Activated CD4-positive, alpha-beta memory T cell treated with anti-CD3 and anti-CD28 coated beads, Interleukin-2, amount 10 ng/mL, durations not matched to agents 7 days and 5 days (primary cell): ENCODE measurements at regions of chr7 and their contacts with region 1.

Region 1: DNA sequence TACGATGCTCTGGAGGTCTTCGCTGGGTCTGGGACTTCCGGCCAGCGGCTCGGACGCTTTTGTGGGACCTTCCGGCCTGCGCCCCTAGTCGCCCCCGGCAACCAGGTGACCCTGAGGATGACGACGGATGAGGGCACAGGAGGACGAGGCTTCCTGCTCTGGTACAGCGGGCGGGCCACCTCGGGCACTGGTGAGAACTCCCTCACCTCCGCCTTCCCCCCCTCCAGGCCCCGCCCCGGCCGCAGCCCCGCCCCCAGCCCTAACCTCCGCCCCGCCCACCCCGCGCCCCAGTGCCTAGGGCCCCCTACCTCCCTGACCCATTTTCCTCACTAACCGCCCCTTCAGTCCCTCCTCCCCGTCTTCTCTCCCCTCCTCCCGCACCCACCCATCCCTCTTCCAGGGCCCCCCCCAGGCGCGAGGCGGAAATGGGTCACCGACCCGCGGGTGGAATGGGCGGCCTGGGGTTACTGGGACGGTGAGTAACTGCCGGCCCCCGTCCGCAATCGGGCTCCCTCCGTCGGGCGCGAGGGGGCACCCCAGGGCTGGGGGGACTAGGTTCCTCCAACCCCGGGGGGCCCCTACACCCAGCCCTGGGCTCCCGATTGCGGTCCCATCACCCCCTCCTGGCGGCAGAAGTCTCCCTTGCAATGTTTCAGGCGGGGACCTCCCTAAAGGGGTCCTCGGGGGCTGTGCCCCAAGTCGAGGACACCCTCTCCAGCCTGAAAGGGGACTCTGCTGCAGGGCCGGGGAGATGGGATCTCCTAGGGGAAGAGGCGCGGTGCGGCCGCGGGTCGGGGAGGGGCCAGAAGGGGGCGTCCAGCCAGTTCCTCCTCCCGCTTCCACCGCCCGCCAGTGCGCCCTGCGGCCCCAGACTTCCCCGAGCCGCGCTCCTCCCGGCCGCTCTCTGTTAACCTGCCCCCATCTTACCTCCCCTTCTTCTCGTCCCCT is 2.1 kb downstream of the PCOLCE start:
- DNase-seq: peak; percentile 85
- H3K4me3 Mint-ChIP-seq: peak overlapping the region; percentile 82
- H3K27ac Mint-ChIP-seq: peak overlapping the region; percentile 86
- H3K4me1 Mint-ChIP-seq: peaks cover 37% of the 10 kb centered on the region
- H3K27me3 Mint-ChIP-seq: peaks cover 3% of the 10 kb centered on the region

Region 2: DNA sequence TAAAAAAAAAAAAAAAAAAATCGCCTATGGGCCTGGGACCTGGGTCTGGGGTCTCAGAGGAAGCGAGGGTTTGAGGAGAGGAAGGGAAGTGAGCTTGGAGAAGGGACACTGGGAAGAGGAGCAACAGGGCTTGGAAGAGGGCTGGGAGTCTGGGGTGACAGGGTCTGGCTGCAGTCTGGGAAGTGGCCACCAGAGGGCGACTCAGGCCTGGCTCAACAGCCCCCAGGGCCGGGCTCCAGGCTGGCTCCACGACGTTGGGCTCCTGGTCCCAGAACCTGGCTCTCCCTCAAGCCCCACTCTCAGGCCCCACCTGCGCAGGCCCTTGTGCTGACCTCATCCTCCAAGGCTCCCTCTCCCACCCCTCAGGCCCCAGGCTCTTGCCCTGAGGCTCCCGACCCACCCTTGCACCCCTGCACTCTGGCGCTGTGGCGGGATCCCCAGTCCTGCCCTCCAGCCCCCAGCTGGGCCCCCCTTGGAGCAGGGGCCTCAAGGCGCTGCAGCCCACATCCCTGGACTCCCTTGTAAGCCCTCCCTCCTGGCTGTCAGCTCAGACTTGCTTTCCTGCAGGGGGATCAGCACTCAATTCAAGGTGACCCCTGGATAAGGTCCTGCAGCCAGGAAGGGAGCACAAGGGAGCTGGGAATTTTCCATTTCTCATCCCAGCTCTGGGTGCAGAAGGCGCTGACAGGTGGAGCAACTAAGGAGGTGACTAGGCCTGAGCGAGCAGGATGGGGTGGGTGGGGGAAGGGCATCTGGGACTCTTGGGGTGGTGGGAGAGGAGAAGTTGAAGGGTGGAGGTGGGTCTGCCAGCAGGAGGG is 134.9 kb before region 1 on chr7:
- CTCF ChIA-PET with region 1: no interaction called
- POLR2A ChIA-PET with region 1: no interaction called
- DNase-seq: peak; percentile 83
- H3K4me3 Mint-ChIP-seq: no peak overlapping the region
- H3K27ac Mint-ChIP-seq: peak overlapping the region; percentile 26
- H3K4me1 Mint-ChIP-seq: peaks cover 24% of the 10 kb centered on the region
- H3K27me3 Mint-ChIP-seq: no peaks in the 10 kb centered on the region

Region 3: DNA sequence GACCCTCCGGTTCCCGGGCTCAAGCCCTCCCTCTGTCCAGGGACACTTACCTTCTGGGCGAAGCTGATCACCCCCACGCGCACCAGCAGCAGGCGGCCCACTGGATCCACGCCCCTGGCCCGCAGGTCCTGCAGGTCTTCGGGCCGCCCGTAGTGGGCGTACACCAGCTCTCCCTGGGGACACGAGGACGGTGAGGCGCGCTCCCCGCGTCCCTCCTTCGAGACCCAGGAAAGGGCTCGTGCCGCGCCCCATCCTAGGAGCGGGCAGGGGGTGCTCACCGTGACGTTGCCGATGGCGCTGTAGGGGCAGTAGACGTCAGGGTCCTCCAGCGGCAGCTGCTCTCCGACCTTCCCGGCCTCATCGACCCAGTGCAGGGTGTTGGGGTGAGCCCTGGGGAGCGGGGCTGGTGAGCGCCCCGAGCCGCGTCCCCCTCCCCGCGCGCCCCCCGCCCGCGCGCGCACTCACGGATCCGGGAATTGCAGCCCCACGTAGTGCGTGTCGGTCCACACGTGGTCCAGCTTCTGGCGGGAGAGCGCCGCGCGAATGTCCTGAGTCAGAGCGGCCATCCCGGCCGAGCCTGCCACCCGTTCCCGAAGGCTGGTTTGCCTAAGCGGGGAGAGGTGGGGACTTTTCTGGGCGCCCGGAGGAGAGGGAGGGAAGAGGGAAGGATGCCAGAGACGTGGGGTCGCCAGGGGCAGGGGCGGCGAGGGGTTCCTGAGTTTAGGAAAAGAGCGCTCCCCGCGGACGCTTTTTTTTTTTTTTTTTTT is 28.8 kb after region 1 on chr7:
- CTCF ChIA-PET with region 1: interaction called, 163 read pairs
- POLR2A ChIA-PET with region 1: interaction called, 32 read pairs
- DNase-seq: peak; percentile 70
- H3K4me3 Mint-ChIP-seq: peak overlapping the region; percentile 81
- H3K27ac Mint-ChIP-seq: peak overlapping the region; percentile 79
- H3K4me1 Mint-ChIP-seq: peaks cover 48% of the 10 kb centered on the region
- H3K27me3 Mint-ChIP-seq: peaks cover 6% of the 10 kb centered on the region